Activated CD4-positive, alpha-beta memory T cell treated with anti-CD3 and anti-CD28 coated beads, Interleukin-2, amount 10 ng/mL, durations not matched to agents 7 days and 5 days (primary cell): ENCODE measurements at regions of chr17 and their contacts with region 1.

Region 1: GRCh38 chr17:77429919-77430752 is 289.4 kb downstream of the SEC14L1 start:
- DNase-seq: peak; percentile 83
- H3K4me3 Mint-ChIP-seq: no peak overlapping the region
- H3K27ac Mint-ChIP-seq: peak overlapping the region; percentile 38
- H3K4me1 Mint-ChIP-seq: peaks cover 83% of the 10 kb centered on the region
- H3K27me3 Mint-ChIP-seq: no peaks in the 10 kb centered on the region

Region 2: GRCh38 chr17:77465358-77466041 is 35.4 kb after region 1 on chr17:
- CTCF ChIA-PET with region 1: interaction called, 17 read pairs
- POLR2A ChIA-PET with region 1: interaction called, 5 read pairs
- DNase-seq: peak; percentile 87
- H3K4me3 Mint-ChIP-seq: peak overlapping the region; percentile 59
- H3K27ac Mint-ChIP-seq: peak overlapping the region; percentile 86
- H3K4me1 Mint-ChIP-seq: peaks cover 84% of the 10 kb centered on the region
- H3K27me3 Mint-ChIP-seq: no peaks in the 10 kb centered on the region

Region 3: DNA sequence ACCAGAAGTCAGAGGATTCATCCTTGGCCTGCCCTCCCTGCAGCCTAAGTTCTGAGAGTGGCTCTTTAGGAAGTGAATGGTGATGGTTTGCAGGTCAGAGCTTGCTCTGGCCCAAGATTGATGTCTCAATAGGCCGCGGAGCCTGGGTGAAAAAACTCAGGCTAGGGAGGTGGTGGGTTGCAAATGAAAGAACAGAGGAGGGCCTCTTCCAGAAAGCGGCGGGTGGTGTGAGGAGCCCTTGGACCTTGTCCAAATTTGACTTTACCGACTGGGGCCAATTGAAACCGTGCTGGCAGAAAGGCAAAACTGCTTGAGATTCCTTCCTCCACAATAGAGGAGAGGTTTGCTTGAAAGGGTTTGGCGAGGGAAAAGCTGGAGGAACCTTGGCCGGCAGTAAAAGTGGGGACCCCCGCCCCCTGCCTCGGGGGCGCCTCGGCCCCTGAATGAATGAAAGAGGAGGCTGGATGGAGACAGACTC is 41.9 kb after region 1 on chr17:
- CTCF ChIA-PET with region 1: interaction called, 10 read pairs
- POLR2A ChIA-PET with region 1: interaction called, 4 read pairs
- DNase-seq: no peak
- H3K4me3 Mint-ChIP-seq: peak overlapping the region; percentile 12
- H3K27ac Mint-ChIP-seq: peak overlapping the region; percentile 84
- H3K4me1 Mint-ChIP-seq: peaks cover 92% of the 10 kb centered on the region
- H3K27me3 Mint-ChIP-seq: no peaks in the 10 kb centered on the region

Region 4: DNA sequence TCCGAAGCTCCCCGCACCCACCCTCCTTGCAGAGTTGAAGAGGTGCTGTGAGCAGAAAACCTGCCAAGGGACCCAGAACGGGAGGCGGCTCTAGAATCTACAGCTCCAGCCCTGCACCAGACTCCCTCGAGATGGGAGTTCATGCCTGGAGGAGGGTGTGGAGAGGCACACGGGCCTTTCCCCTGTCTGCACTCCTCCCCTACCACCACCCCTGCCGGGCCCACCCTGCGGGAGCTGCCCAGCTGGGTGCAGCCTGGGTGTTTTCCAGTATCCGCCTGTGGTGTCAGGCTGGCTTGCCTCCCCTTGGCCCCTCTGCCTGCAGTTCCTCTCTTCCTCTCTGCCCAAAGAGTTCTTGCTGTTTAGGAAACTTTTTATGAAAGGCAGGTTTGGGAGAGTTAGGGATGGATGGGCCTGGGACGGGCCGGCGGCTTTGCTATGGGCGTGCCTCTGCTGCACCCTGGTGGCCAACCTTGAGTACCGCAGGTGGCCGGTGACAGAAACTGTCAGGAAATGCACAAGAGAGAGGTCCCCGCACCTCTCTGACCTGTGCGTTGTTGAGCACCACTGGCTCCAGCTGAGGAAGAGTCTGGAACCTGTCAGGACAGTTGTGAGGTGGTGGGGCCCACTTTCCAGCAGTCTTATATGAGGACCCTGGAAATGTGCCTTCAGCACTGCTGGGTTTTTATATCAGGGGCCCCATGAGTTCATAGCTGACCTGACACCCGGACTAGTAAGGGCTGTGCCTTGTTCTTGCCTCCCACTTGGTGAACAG is 64.7 kb after region 1 on chr17:
- CTCF ChIA-PET with region 1: interaction called, 44 read pairs
- POLR2A ChIA-PET with region 1: interaction called, 11 read pairs
- DNase-seq: peak; percentile 76
- H3K4me3 Mint-ChIP-seq: no peak overlapping the region
- H3K27ac Mint-ChIP-seq: peak overlapping the region; percentile 65
- H3K4me1 Mint-ChIP-seq: peaks cover 25% of the 10 kb centered on the region
- H3K27me3 Mint-ChIP-seq: no peaks in the 10 kb centered on the region

Region 5: GRCh38 chr17:77520936-77521475 is 90.9 kb after region 1 on chr17:
- CTCF ChIA-PET with region 1: no interaction called
- POLR2A ChIA-PET with region 1: no interaction called
- DNase-seq: no peak
- H3K4me3 Mint-ChIP-seq: no peak overlapping the region
- H3K27ac Mint-ChIP-seq: no peak overlapping the region
- H3K4me1 Mint-ChIP-seq: no peaks in the 10 kb centered on the region
- H3K27me3 Mint-ChIP-seq: peaks cover 13% of the 10 kb centered on the region